ENCODE measurements at regions of chr12 and their contacts with region 1.

Region 1: GRCh38 chr12:15662303-15662980 is 126.7 kb downstream of the EPS8 start:
- DNase-seq: peak in 1 of 2 experiments; percentile 96
- H3K4me3 ChIP-seq: peak overlapping the region; percentile 13; the same call in 1 of the 2 replicates
- H3K27ac ChIP-seq: peak overlapping the region; percentile 97
- H3K4me1 ChIP-seq: peaks cover 23% of the 10 kb centered on the region
- H3K27me3 ChIP-seq: no peaks in the 10 kb centered on the region
- CTCF ChIP-seq: no peak

Region 2: DNA sequence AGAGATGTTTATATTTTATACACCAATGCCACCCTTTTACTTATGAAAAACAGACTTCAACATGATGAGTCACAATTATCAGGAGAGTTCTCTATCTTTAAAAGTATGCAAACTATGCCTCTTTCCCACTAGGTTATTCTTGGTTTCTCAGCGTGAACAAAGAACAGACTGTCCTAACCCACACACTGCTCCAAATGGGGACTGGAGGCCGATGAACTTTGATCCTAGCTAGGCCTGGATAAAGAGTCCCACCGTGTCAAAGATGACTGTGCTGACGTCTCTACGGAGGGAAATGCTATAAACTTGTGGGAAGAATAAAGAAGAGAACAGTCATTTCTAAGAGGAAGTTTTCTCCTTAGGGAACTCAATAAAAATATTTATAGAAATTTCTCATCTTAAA is 33.3 kb before region 1 on chr12:
- CTCF ChIA-PET with region 1: no interaction called
- POLR2A ChIA-PET with region 1: interaction called, 4 read pairs
- intact Hi-C with region 1: loop called (anchors 2 kb)
- DNase-seq: peak; percentile 79 to 95
- H3K4me3 ChIP-seq: no peak overlapping the region
- H3K27ac ChIP-seq: peak overlapping the region; percentile 96
- H3K4me1 ChIP-seq: peaks cover 31% of the 10 kb centered on the region
- H3K27me3 ChIP-seq: no peaks in the 10 kb centered on the region
- CTCF ChIP-seq: no peak

Region 3: GRCh38 chr12:15688202-15688736 is 25.8 kb after region 1 on chr12:
- CTCF ChIA-PET with region 1: interaction called, 17 read pairs
- POLR2A ChIA-PET with region 1: no interaction called
- intact Hi-C with region 1: loop called (anchors 2 kb)
- DNase-seq: no peak
- H3K4me3 ChIP-seq: no peak overlapping the region
- H3K27ac ChIP-seq: no peak overlapping the region
- H3K4me1 ChIP-seq: peaks cover 15% of the 10 kb centered on the region
- H3K27me3 ChIP-seq: no peaks in the 10 kb centered on the region
- CTCF ChIP-seq: no peak

Region 4: GRCh38 chr12:15801770-15802744 is 139.6 kb after region 1 on chr12:
- CTCF ChIA-PET with region 1: no interaction called
- POLR2A ChIA-PET with region 1: no interaction called
- intact Hi-C with region 1: loop called (anchors 1 kb)
- DNase-seq: peak; percentile 77 to 93
- H3K4me3 ChIP-seq: no peak overlapping the region
- H3K27ac ChIP-seq: peak overlapping the region; percentile 44
- H3K4me1 ChIP-seq: peaks cover 61% of the 10 kb centered on the region
- H3K27me3 ChIP-seq: no peaks in the 10 kb centered on the region
- CTCF ChIP-seq: no peak

Measured in PC-9 (cell line).